ENCODE measurements at regions of chr15 and their contacts with region 1.

Region 1: GRCh38 chr15:34101366-34102175 is at the starts of genes EMC7 and PGBD4:
- DNase-seq: peak; percentile 99 to 100 (median 99)
- H3K4me3 ChIP-seq: peak within 1 kb of the TSS; percentile 87 to 98 (median 97)
- H3K4me3 Mint-ChIP-seq: peak within 1 kb of the TSS; percentile 98 to 99
- H3K27ac ChIP-seq: peak within 1 kb of the TSS; percentile 91 to 96
- H3K27ac Mint-ChIP-seq: peak within 1 kb of the TSS; percentile 98 to 100 (median 99)
- H3K4me1 ChIP-seq: peaks cover 23 to 28% of the 10 kb centered on the region in 2 donors
- H3K4me1 Mint-ChIP-seq: peaks cover 20% of the 10 kb centered on the region
- H3K27me3 ChIP-seq: no peaks in the 10 kb centered on the region
- H3K27me3 Mint-ChIP-seq: no peaks in the 10 kb centered on the region
- CTCF ChIP-seq: no peak
- polyA plus RNA-seq, gene EMC7: 41.7 to 135 (median 125) TPM
- polyA plus RNA-seq, gene PGBD4: 0.38 to 0.93 (median 0.58) TPM

Region 2: GRCh38 chr15:34065941-34066340 is 35.6 kb before region 1 on chr15:
- intact Hi-C with region 1: no loop called
- DNase-seq: no peak
- H3K4me3 ChIP-seq: no peak overlapping the region
- H3K4me3 Mint-ChIP-seq: no peak overlapping the region
- H3K27ac ChIP-seq: no peak overlapping the region
- H3K27ac Mint-ChIP-seq: no peak overlapping the region
- H3K4me1 ChIP-seq: no peaks in the 10 kb centered on the region
- H3K4me1 Mint-ChIP-seq: peaks cover 3% of the 10 kb centered on the region
- H3K27me3 ChIP-seq: no peaks in the 10 kb centered on the region
- H3K27me3 Mint-ChIP-seq: peaks cover 0 to 4% (median 0%) of the 10 kb centered on the region in 3 donors
- CTCF ChIP-seq: no peak

Region 3: GRCh38 chr15:34209421-34210282 is 108.1 kb after region 1 on chr15 and contains the start of gene KATNBL1:
- intact Hi-C with region 1: loop called (anchors 5 kb)
- DNase-seq: peak; percentile 91 to 96 (median 93)
- H3K4me3 ChIP-seq: peak within 1 kb of the TSS; percentile 67 to 96 (median 84)
- H3K4me3 Mint-ChIP-seq: peak within 1 kb of the TSS; percentile 88 to 93
- H3K27ac ChIP-seq: peak within 1 kb of the TSS; percentile 57 to 78
- H3K27ac Mint-ChIP-seq: peak within 1 kb of the TSS; percentile 76 to 92 (median 87)
- H3K4me1 ChIP-seq: peaks cover 6 to 10% of the 10 kb centered on the region in 2 donors
- H3K4me1 Mint-ChIP-seq: peaks cover 13% of the 10 kb centered on the region
- H3K27me3 ChIP-seq: no peaks in the 10 kb centered on the region
- H3K27me3 Mint-ChIP-seq: peaks cover 0 to 4% (median 0%) of the 10 kb centered on the region in 3 donors
- CTCF ChIP-seq: peak; percentile 80
- polyA plus RNA-seq, gene KATNBL1: 16.5 to 38.4 (median 37.7) TPM

Region 4: DNA sequence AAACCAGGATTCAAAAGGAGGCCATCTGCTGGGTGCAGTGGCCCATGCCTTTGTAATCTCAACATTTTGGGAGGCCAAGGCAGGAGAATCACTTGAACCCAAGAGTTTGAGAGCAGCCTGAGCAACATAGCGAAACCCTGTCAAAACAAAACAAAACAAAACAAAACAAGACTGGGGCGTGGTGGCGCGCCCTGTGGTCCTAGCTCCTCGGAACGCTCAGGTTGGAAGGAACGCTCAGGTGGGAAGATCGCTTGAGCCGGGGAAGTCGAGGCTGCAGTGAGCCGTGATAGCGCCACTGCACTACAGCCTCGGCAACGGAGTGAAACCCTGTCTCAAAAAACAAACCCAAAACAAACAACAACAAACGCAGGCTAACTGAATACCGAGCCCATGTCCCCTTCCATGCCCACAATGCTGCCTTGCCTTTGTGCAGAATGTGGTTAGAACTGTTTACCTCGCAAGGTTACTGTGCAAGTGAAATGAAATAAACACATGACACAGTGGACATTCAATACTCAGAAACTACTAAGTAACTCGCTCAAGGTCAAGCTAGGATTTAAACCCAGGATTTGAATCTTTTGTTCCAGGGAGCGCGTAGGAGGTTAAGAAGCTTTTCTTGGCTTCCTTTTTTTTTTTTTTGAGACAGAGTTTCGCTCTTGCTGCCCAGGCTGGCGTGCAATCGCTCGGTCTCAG is 122.5 kb after region 1 on chr15:
- intact Hi-C with region 1: loop called (anchors 1 to 5 kb)
- DNase-seq: peak; percentile 4 to 7 (median 6)
- H3K4me3 ChIP-seq: peak overlapping the region; percentile 78 to 100 (median 93)
- H3K4me3 Mint-ChIP-seq: peak overlapping the region; percentile 94 to 96
- H3K27ac ChIP-seq: peak overlapping the region; percentile 72 to 99
- H3K27ac Mint-ChIP-seq: peak overlapping the region; percentile 95 to 99 (median 96)
- H3K4me1 ChIP-seq: peaks cover 16 to 19% of the 10 kb centered on the region in 2 donors
- H3K4me1 Mint-ChIP-seq: peaks cover 18% of the 10 kb centered on the region
- H3K27me3 ChIP-seq: no peaks in the 10 kb centered on the region
- H3K27me3 Mint-ChIP-seq: peaks cover 0 to 1% (median 0%) of the 10 kb centered on the region in 3 donors
- CTCF ChIP-seq: no peak

Region 5: GRCh38 chr15:34337557-34338306 is 236.2 kb after region 1 on chr15 and contains the start of gene SLC12A6:
- intact Hi-C with region 1: loop called in 1 of 2 experiments (anchors 5 kb)
- DNase-seq: peak; percentile 92 to 95 (median 93)
- H3K4me3 ChIP-seq: peak within 1 kb of the TSS; percentile 75 to 99 (median 93)
- H3K4me3 Mint-ChIP-seq: peak within 1 kb of the TSS; percentile 93 to 98
- H3K27ac ChIP-seq: peak within 1 kb of the TSS; percentile 90 to 98
- H3K27ac Mint-ChIP-seq: peak within 1 kb of the TSS; percentile 94 to 99 (median 97)
- H3K4me1 ChIP-seq: peaks cover 57 to 70% of the 10 kb centered on the region in 2 donors
- H3K4me1 Mint-ChIP-seq: peaks cover 55% of the 10 kb centered on the region
- H3K27me3 ChIP-seq: no peaks in the 10 kb centered on the region
- H3K27me3 Mint-ChIP-seq: peaks cover 0 to 2% (median 0%) of the 10 kb centered on the region in 3 donors
- CTCF ChIP-seq: no peak
- polyA plus RNA-seq, gene SLC12A6: 5.4 to 80.0 (median 8.0) TPM